ENCODE measurements at regions of chr6 and their contacts with region 1.

Region 1: DNA sequence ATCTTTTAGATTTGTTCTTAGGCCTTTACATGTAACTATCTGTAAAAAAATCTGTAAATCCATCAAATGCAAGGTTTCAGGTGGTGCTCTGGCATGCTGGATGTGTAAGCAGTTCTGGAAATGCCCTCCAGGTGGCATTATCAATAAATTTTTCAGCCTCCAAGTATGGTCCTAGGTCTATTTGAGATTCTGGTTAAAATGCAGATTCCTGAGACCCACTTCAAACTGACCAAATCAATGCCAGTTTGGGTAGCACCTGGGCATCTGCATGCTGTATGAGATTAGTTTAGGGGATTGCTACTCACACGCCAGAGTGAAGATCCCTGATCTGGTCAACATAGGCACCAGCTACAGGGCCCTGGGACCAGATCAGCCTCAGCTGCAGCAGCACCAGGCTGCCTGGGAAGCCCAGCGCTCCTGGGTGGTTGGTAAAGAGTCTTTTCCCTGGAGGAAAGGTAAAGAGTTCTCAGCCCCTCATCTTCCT is 507.3 kb upstream of the CITED2 start:
- DNase-seq: peak; percentile 39
- ATAC-seq: peak; percentile 34
- H3K4me3 Mint-ChIP-seq: no peak overlapping the region
- H3K27ac Mint-ChIP-seq: no peak overlapping the region
- H3K4me1 Mint-ChIP-seq: no peaks in the 10 kb centered on the region
- H3K27me3 Mint-ChIP-seq: peaks cover 2% of the 10 kb centered on the region
- CTCF ChIP-seq: peak; percentile 52

Region 2: GRCh38 chr6:139801571-139802321 is 80.0 kb before region 1 on chr6:
- CTCF ChIA-PET with region 1: no interaction called
- POLR2A ChIA-PET with region 1: no interaction called
- intact Hi-C with region 1: no loop called
- DNase-seq: no peak
- ATAC-seq: no peak
- H3K4me3 Mint-ChIP-seq: no peak overlapping the region
- H3K27ac Mint-ChIP-seq: no peak overlapping the region
- H3K4me1 Mint-ChIP-seq: no peaks in the 10 kb centered on the region
- H3K27me3 Mint-ChIP-seq: peaks cover 10% of the 10 kb centered on the region
- CTCF ChIP-seq: no peak

Region 3: DNA sequence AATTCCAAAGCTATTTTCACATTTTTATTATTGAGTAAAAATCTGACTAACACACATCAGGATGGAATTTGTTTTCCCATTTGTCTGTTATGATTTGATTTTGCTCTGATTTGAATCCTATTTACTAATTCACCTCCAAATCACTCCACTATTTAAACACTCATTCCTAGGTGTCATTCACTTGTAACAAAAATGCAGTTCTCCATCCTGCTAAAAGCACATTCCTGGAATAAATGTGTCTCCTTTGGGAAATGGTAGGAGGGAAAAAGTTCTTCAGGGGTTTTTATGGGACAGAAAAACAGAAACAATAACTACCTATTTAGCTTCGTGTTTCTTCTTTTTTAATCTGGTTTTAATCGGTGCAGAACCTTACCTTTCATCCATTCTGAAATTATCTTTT is 13.2 kb before region 1 on chr6:
- CTCF ChIA-PET with region 1: interaction called, 10 read pairs
- POLR2A ChIA-PET with region 1: no interaction called
- intact Hi-C with region 1: no loop called
- DNase-seq: no peak
- ATAC-seq: no peak
- H3K4me3 Mint-ChIP-seq: no peak overlapping the region
- H3K27ac Mint-ChIP-seq: no peak overlapping the region
- H3K4me1 Mint-ChIP-seq: no peaks in the 10 kb centered on the region
- H3K27me3 Mint-ChIP-seq: no peaks in the 10 kb centered on the region
- CTCF ChIP-seq: no peak

Region 4: GRCh38 chr6:140153703-140154102 is 271.9 kb after region 1 on chr6:
- CTCF ChIA-PET with region 1: no interaction called
- POLR2A ChIA-PET with region 1: no interaction called
- intact Hi-C with region 1: no loop called
- DNase-seq: no peak
- ATAC-seq: no peak
- H3K4me3 Mint-ChIP-seq: no peak overlapping the region
- H3K27ac Mint-ChIP-seq: no peak overlapping the region
- H3K4me1 Mint-ChIP-seq: no peaks in the 10 kb centered on the region
- H3K27me3 Mint-ChIP-seq: no peaks in the 10 kb centered on the region
- CTCF ChIP-seq: no peak

Measured in activated CD8-positive, alpha-beta T cell treated with anti-CD3 and anti-CD28 coated beads for 36 hours (primary cell).